ENCODE measurements at regions of chr11 and their contacts with region 1.

Region 1: DNA sequence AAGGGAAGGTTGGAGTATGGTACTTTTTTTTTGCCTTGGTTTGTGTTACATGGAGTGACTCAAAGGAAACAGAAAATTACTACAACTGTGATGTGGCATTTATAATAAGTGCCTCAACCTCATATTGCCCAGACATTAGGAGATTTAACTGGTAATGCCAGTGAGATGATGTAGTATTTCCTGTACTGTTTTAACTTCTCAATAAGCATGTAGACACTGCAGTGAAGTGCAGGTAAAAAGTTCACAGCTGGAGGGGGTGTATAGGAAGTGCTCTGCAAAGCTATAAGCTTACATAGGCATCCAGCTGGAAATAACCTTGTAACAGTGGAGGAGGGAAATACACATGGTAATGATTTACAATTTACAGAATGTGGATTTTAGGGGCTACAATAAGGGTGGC is 138.2 kb upstream of the MTMR2 start:
- DNase-seq: peak in 3 of 9 experiments; percentile 27 to 57 (median 33)
- ATAC-seq: peak; percentile 98
- H3K4me3 ChIP-seq: no peak overlapping the region
- H3K4me3 Mint-ChIP-seq: no peak overlapping the region
- H3K27ac ChIP-seq: no peak overlapping the region
- H3K27ac Mint-ChIP-seq: peak overlapping the region; percentile 79
- H3K4me1 ChIP-seq: peaks cover 34% of the 10 kb centered on the region
- H3K4me1 Mint-ChIP-seq: peaks cover 62% of the 10 kb centered on the region
- H3K27me3 ChIP-seq: no peaks in the 10 kb centered on the region
- H3K27me3 Mint-ChIP-seq: no peaks in the 10 kb centered on the region
- CTCF ChIP-seq: no peak

Region 2: DNA sequence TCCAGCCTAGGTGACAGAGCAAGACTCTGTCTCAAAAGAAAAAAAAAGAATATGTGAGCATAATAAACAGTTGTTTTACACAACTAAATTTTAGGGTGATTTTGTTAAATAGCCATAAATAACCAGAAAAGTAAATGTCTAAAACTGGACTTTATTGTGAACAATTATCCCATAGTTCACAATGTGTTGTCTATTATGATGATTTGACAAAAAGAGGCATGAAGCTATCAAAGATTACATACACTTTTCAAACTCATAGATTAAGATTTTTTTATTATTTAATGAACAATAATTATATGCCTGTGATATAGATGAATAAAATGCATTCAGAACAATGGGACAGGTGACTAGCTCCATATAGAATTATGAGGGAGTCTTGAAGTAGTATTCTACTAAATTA is 111.2 kb before region 1 on chr11:
- CTCF ChIA-PET with region 1: no interaction called
- POLR2A ChIA-PET with region 1: no interaction called
- intact Hi-C with region 1: no loop called
- DNase-seq: no peak
- ATAC-seq: no peak
- H3K4me3 ChIP-seq: no peak overlapping the region
- H3K4me3 Mint-ChIP-seq: no peak overlapping the region
- H3K27ac ChIP-seq: no peak overlapping the region
- H3K27ac Mint-ChIP-seq: no peak overlapping the region
- H3K4me1 ChIP-seq: no peaks in the 10 kb centered on the region
- H3K4me1 Mint-ChIP-seq: no peaks in the 10 kb centered on the region
- H3K27me3 ChIP-seq: no peaks in the 10 kb centered on the region
- H3K27me3 Mint-ChIP-seq: no peaks in the 10 kb centered on the region
- CTCF ChIP-seq: no peak

Region 3: DNA sequence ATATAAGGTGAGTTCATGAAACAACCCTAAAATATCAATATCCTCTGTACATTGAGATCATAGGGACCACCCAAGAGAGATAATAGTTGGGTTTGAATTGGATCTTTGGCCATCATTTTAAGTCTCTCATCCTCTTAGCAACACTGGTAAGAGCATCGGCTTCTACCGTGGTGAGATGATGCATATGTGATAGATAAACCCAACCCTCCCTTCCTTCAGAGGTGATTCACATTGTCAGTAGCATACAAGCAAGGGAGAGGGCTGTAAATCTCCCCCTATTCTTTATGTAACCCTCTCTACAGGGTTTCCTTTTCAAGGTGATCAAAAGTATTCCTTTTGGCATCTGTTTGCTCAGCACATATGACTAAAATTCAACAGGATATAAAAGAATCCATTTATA is 35.8 kb before region 1 on chr11:
- CTCF ChIA-PET with region 1: no interaction called
- POLR2A ChIA-PET with region 1: no interaction called
- intact Hi-C with region 1: no loop called
- DNase-seq: no peak
- ATAC-seq: peak; percentile 67
- H3K4me3 ChIP-seq: no peak overlapping the region
- H3K4me3 Mint-ChIP-seq: no peak overlapping the region
- H3K27ac ChIP-seq: no peak overlapping the region
- H3K27ac Mint-ChIP-seq: peak overlapping the region; percentile 34
- H3K4me1 ChIP-seq: peaks cover 17% of the 10 kb centered on the region
- H3K4me1 Mint-ChIP-seq: peaks cover 73% of the 10 kb centered on the region
- H3K27me3 ChIP-seq: no peaks in the 10 kb centered on the region
- H3K27me3 Mint-ChIP-seq: no peaks in the 10 kb centered on the region
- CTCF ChIP-seq: no peak

Region 4: DNA sequence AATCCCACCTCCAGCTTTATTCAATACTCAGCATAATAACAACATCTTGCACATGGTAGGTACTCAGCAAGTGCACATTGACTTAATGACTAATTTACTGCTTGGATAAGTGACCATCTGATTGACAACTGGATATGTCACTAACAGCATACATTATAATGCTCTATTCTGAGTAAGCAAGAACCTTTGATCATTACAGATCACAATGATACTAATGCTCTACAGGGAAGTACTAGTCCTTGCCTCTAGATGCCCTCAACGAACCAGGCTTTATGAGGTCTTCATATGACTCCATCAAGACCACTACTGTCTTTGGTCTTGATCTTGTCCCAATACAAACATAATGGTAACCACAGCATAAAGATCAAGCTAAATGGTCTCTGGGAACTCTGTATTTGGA is 29.3 kb after region 1 on chr11:
- CTCF ChIA-PET with region 1: no interaction called
- POLR2A ChIA-PET with region 1: no interaction called
- intact Hi-C with region 1: no loop called
- DNase-seq: peak in 4 of 9 experiments; percentile 14 to 66 (median 42)
- ATAC-seq: peak; percentile 97
- H3K4me3 ChIP-seq: no peak overlapping the region
- H3K4me3 Mint-ChIP-seq: no peak overlapping the region
- H3K27ac ChIP-seq: no peak overlapping the region
- H3K27ac Mint-ChIP-seq: peak overlapping the region; percentile 90
- H3K4me1 ChIP-seq: peaks cover 24% of the 10 kb centered on the region
- H3K4me1 Mint-ChIP-seq: peaks cover 81% of the 10 kb centered on the region
- H3K27me3 ChIP-seq: no peaks in the 10 kb centered on the region
- H3K27me3 Mint-ChIP-seq: no peaks in the 10 kb centered on the region
- CTCF ChIP-seq: peak; percentile 41

Region 5: DNA sequence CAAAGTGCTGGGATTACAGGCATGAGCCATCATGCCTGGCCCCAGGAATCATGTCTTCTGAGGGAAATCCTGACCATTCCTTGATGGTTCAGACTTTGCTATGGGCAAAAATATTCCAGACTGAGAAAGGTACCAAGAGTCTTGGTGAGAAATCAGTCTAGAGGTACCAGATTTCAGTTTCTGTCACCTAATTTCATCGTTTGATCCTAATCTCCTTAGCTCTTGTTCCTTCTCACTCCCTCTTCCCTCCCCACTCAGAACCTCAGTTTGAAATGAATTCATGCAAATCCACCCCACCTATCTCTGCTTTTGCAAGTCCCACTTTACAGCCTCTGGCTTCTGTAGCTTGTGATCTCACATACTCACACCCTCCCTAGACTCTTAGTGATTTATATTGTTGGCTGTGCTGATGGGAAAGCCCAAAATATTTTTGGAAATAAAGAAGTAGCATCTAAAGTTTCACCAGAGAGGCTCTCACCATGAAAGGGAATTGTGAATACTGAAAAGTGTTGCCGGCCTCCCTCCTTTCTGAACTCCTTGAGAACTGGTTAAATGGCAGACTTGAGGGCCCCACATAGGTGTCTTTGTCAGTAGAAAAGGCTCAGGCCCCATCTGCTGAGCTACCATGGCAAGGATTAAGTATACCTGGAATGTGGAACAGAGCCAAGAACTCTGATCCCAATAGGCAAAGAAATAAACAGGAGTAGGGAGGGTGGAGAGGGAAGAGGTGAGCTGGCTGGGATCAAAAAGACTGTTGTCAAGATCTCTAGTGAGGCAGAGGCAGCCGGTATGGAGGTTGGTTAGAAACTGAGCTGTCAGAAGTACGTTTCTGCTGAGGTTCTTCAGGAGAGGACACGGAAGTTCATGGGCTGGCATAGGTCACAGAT is 52.3 kb after region 1 on chr11:
- CTCF ChIA-PET with region 1: no interaction called
- POLR2A ChIA-PET with region 1: no interaction called
- intact Hi-C with region 1: loop called in 1 of 2 experiments (anchors 5 kb)
- DNase-seq: no peak
- ATAC-seq: no peak
- H3K4me3 ChIP-seq: no peak overlapping the region
- H3K4me3 Mint-ChIP-seq: no peak overlapping the region
- H3K27ac ChIP-seq: no peak overlapping the region
- H3K27ac Mint-ChIP-seq: peak overlapping the region; percentile 75
- H3K4me1 ChIP-seq: peaks cover 8% of the 10 kb centered on the region
- H3K4me1 Mint-ChIP-seq: peaks cover 63% of the 10 kb centered on the region
- H3K27me3 ChIP-seq: no peaks in the 10 kb centered on the region
- H3K27me3 Mint-ChIP-seq: no peaks in the 10 kb centered on the region
- CTCF ChIP-seq: no peak